Endothelial cell of umbilical vein (primary cell): ENCODE measurements at regions of chr5 and their contacts with region 1.

Region 1: DNA sequence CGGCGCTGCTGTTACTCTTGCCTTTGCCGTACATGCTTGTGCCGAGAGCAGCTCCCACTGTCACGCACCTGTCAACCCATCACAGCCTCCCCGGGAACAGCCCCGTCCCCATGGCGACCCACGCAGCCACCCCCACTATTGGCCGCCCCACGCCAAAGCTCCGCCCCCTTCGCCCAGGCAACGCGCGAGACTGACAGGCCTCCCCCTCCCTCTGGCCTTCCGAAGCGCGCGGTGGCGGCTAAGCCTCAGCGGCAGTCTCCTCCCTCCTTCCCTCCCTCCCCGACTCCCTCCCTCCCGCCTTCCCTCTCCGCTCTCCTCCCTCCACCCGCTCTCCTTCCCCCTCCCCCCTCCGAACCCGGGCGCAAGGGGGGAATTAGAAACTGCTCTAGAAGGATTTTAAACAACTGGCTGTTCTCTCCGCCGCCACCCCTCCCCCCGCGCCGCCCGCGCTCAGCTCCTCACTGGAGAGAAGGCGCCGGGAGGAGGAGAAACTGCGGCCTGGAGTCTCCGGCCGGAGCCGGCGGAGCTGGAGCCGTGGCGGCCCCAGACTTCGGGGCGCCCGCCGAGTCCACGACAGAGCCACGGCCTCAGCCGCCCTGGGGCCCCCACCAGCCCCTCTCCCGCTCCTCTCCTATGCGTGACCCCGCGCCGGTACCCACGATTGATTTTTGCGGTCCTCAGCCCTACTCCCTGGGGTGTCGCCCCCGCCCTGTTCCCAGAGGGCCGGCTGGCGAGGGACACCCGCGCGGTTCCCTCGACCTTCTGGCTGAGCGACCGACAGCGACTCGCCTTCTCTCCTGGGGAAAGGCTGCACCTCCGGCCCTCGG is at the start of gene SSBP2:
- DNase-seq: peak; percentile 99
- H3K4me3 ChIP-seq: peak within 1 kb of the TSS; percentile 55 to 76 (median 69)
- H3K27ac ChIP-seq: peak within 1 kb of the TSS; percentile 92
- H3K4me1 ChIP-seq: peaks cover 15% of the 10 kb centered on the region
- H3K27me3 ChIP-seq: no peaks in the 10 kb centered on the region
- CTCF ChIP-seq: no peak
- POLR2A ChIP-seq: peak; percentile 63
- total RNA-seq, gene SSBP2: 7.9 and 9.6 TPM in 2 replicates

Region 2: GRCh38 chr5:81425569-81425968 is 325.7 kb before region 1 on chr5:
- CTCF ChIA-PET with region 1: interaction called, 54 read pairs
- POLR2A ChIA-PET with region 1: no interaction called
- dilution Hi-C with region 1: no loop called
- intact Hi-C with region 1: loop called (anchors 1 kb)
- DNase-seq: peak; percentile 65
- H3K4me3 ChIP-seq: no peak overlapping the region
- H3K27ac ChIP-seq: no peak overlapping the region
- H3K4me1 ChIP-seq: peaks cover 36% of the 10 kb centered on the region
- H3K27me3 ChIP-seq: no peaks in the 10 kb centered on the region
- CTCF ChIP-seq: peak; percentile 26 to 32
- POLR2A ChIP-seq: no peak

Region 3: GRCh38 chr5:81552852-81553566 is 198.2 kb before region 1 on chr5:
- CTCF ChIA-PET with region 1: interaction called, 3 read pairs
- POLR2A ChIA-PET with region 1: no interaction called
- dilution Hi-C with region 1: no loop called
- intact Hi-C with region 1: loop called (anchors 1 kb)
- DNase-seq: peak; percentile 85
- H3K4me3 ChIP-seq: peak overlapping the region in 1 of 3 experiments; percentile 18
- H3K27ac ChIP-seq: peak overlapping the region; percentile 79
- H3K4me1 ChIP-seq: peaks cover 28% of the 10 kb centered on the region
- H3K27me3 ChIP-seq: no peaks in the 10 kb centered on the region
- CTCF ChIP-seq: no peak
- POLR2A ChIP-seq: no peak

Region 4: DNA sequence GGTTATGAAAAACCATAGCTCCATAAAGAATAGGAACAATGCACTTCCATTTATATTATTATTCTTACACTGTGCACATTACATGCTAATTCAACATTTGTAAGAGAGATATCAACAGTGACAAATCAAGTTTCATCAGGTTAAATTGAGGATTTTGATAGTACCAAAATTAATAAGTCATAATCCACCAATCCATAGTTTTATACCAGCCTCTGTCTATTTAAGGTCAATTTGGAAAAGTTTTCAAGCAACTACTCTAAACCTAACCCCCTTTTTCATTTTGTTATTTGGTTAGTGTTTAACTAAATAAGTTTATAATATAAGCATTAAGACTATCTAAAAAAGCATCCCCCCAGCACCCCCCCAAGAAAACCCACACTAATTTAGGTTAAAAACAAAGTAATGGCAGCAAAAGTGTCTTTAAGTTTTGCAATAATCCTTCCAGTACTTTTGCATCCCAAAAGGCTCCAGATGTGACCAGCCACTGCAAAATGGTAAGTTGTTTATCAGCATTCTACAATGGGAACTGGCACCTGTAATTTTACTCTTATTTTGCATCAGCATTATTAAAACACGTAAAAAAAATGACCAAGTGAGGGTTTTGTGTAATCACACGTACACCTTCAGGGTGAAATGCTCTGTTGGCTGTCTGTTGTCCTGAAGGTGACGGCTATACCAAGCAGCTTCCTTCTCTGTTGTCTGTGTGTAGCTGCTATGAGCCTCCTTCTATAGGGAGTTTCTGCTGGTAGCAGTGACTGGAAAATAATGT is 36.4 kb after region 1 on chr5:
- CTCF ChIA-PET with region 1: interaction called, 21 read pairs
- POLR2A ChIA-PET with region 1: no interaction called
- dilution Hi-C with region 1: no loop called
- intact Hi-C with region 1: loop called (anchors 1 kb)
- DNase-seq: peak; percentile 77
- H3K4me3 ChIP-seq: no peak overlapping the region
- H3K27ac ChIP-seq: no peak overlapping the region
- H3K4me1 ChIP-seq: no peaks in the 10 kb centered on the region
- H3K27me3 ChIP-seq: no peaks in the 10 kb centered on the region
- CTCF ChIP-seq: no peak
- POLR2A ChIP-seq: no peak

Region 5: GRCh38 chr5:81856948-81857928 is 106.0 kb after region 1 on chr5:
- CTCF ChIA-PET with region 1: interaction called, 89 read pairs
- POLR2A ChIA-PET with region 1: interaction called, 37 read pairs
- dilution Hi-C with region 1: no loop called
- intact Hi-C with region 1: no loop called
- DNase-seq: peak; percentile 62
- H3K4me3 ChIP-seq: no peak overlapping the region
- H3K27ac ChIP-seq: no peak overlapping the region
- H3K4me1 ChIP-seq: peaks cover 5% of the 10 kb centered on the region
- H3K27me3 ChIP-seq: no peaks in the 10 kb centered on the region
- CTCF ChIP-seq: peak in 1 of 2 donors; percentile 43
- POLR2A ChIP-seq: no peak

Region 6: GRCh38 chr5:82165740-82166530 is 414.7 kb after region 1 on chr5:
- CTCF ChIA-PET with region 1: interaction called, 44 read pairs
- POLR2A ChIA-PET with region 1: interaction called, 8 read pairs
- dilution Hi-C with region 1: no loop called
- intact Hi-C with region 1: loop called (anchors 1 kb)
- DNase-seq: peak; percentile 86
- H3K4me3 ChIP-seq: no peak overlapping the region
- H3K27ac ChIP-seq: peak overlapping the region; percentile 17
- H3K4me1 ChIP-seq: peaks cover 26% of the 10 kb centered on the region
- H3K27me3 ChIP-seq: no peaks in the 10 kb centered on the region
- CTCF ChIP-seq: peak; percentile 60 to 64
- POLR2A ChIP-seq: no peak